IMR-90 (cell line): ENCODE measurements at regions of chr7 and their contacts with region 1.

Region 1: GRCh38 chr7:26061688-26062150 is 90.3 kb upstream of the NFE2L3 start:
- DNase-seq: peak; percentile 7
- ATAC-seq: peak; percentile 67
- H3K4me3 ChIP-seq: no peak overlapping the region
- H3K27ac ChIP-seq: no peak overlapping the region
- H3K4me1 ChIP-seq: no peaks in the 10 kb centered on the region
- H3K27me3 ChIP-seq: 0 out of 2 replicates have a peak, but pooled peaks cover under 1% of the 10 kb centered on the region
- CTCF ChIP-seq: peak; percentile 62
- POLR2A ChIP-seq: no peak
- RAD21 ChIP-seq: peak; percentile 28

Region 2: GRCh38 chr7:24560772-24561171 is 1500.9 kb before region 1 on chr7:
- CTCF ChIA-PET with region 1: no interaction called
- POLR2A ChIA-PET with region 1: no interaction called
- dilution Hi-C with region 1: no loop called
- in situ Hi-C with region 1: no loop called
- intact Hi-C with region 1: no loop called
- DNase-seq: no peak
- ATAC-seq: no peak
- H3K4me3 ChIP-seq: no peak overlapping the region
- H3K27ac ChIP-seq: no peak overlapping the region
- H3K4me1 ChIP-seq: no peaks in the 10 kb centered on the region
- H3K27me3 ChIP-seq: peaks cover 2% of the 10 kb centered on the region
- CTCF ChIP-seq: no peak
- POLR2A ChIP-seq: no peak
- RAD21 ChIP-seq: no peak

Region 3: DNA sequence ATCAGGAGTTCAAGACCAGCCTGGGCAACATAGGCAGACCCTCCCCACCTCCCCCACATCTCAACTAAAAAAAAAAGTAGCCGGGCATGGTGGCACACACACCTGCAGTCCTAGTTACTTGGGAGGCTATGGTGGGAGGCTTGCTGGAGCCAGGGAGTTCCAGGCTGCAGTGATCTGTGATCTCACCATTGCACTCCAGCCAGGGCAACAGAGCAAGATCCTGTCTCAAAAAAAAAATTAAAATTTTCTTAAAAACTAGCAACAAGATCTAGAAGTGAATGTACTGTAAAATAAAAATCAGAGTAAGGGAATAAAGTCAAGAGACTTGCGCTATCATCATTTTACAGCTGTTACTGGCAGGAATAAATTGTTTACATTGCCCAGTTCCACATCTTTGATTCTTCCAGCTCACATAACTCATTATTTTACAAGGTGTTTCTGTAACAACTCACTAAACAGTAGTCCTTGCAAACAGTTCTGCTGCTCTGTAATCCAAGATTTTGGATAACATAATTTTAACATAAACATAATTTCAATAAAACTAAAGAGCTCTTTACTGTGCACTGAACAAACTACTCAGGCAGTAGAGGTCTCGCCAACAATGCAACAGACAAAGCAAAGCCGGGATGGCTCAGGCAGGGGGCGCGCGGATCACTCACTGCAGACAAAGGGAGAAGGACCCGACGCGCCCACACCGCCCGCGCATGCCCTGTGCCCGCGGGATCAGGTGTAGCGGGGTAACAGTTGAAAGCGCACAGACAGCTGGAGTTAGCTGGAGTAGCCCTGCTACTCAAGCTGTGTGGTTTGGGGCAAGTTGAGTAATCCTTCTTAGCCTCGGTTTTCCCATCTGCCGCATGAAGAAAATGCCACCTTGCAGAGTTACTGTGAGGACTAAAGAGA is 17.0 kb after region 1 on chr7:
- CTCF ChIA-PET with region 1: no interaction called
- POLR2A ChIA-PET with region 1: interaction called, 16 read pairs
- dilution Hi-C with region 1: no loop called
- in situ Hi-C with region 1: no loop called
- intact Hi-C with region 1: no loop called
- DNase-seq: no peak
- ATAC-seq: peak; percentile 51; the same call in 1 of the 2 replicates
- H3K4me3 ChIP-seq: no peak overlapping the region
- H3K27ac ChIP-seq: no peak overlapping the region
- H3K4me1 ChIP-seq: no peaks in the 10 kb centered on the region
- H3K27me3 ChIP-seq: peaks cover 43% of the 10 kb centered on the region
- CTCF ChIP-seq: 0 out of 2 replicates have a peak, but pooled peaks have one; percentile 25
- POLR2A ChIP-seq: no peak
- RAD21 ChIP-seq: no peak

Region 4: GRCh38 chr7:26090927-26091519 is 29.3 kb after region 1 on chr7:
- CTCF ChIA-PET with region 1: no interaction called
- POLR2A ChIA-PET with region 1: no interaction called
- dilution Hi-C with region 1: no loop called
- in situ Hi-C with region 1: no loop called
- intact Hi-C with region 1: no loop called
- DNase-seq: peak; percentile 74
- ATAC-seq: peak; percentile 89
- H3K4me3 ChIP-seq: no peak overlapping the region
- H3K27ac ChIP-seq: no peak overlapping the region
- H3K4me1 ChIP-seq: no peaks in the 10 kb centered on the region
- H3K27me3 ChIP-seq: peaks cover 11% of the 10 kb centered on the region
- CTCF ChIP-seq: peak; percentile 76
- POLR2A ChIP-seq: no peak
- RAD21 ChIP-seq: peak; percentile 80

Region 5: GRCh38 chr7:26388256-26388655 is 326.5 kb after region 1 on chr7:
- CTCF ChIA-PET with region 1: no interaction called
- POLR2A ChIA-PET with region 1: no interaction called
- dilution Hi-C with region 1: no loop called
- in situ Hi-C with region 1: no loop called
- intact Hi-C with region 1: no loop called
- DNase-seq: no peak
- ATAC-seq: no peak
- H3K4me3 ChIP-seq: no peak overlapping the region
- H3K27ac ChIP-seq: no peak overlapping the region
- H3K4me1 ChIP-seq: no peaks in the 10 kb centered on the region
- H3K27me3 ChIP-seq: peaks cover 5% of the 10 kb centered on the region
- CTCF ChIP-seq: no peak
- POLR2A ChIP-seq: no peak
- RAD21 ChIP-seq: no peak